B cell (primary cell): ENCODE measurements at regions of chr6 and their contacts with region 1.

Region 1: DNA sequence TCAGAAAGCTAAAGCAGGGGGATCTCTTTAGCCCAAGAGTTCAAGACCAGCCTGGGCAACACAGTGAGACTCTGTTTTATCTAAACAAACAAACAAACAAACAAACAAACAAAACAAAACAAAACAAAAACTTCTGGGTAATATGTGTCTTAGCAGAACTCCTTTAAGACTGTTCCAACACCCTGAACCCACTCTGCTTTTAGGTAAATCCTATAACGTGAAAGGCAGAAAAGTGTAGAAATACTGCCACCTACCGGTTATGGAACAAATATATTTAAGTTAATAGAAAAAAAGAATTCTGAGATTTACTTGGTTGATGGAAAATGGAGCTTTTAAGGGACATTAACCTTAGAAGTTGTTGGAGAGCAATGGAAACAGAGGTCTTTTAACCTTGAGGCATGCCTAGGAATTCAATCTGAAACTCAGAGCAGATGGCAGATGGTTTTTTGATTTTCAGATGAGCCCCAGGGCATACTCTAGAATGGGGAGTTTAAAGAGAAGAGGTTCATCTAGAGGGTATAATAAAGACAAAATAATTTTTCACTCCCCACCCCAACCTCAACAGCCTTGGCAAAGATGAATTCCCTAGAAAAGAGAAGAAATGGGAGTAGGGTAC is 38.5 kb downstream of the SOD2 start:
- DNase-seq: peak; percentile 70
- ATAC-seq: no peak
- H3K4me3 ChIP-seq: no peak overlapping the region
- H3K4me3 Mint-ChIP-seq: no peak overlapping the region
- H3K27ac ChIP-seq: no peak overlapping the region
- H3K27ac Mint-ChIP-seq: no peak overlapping the region
- H3K4me1 ChIP-seq: no peaks in the 10 kb centered on the region
- H3K4me1 Mint-ChIP-seq: no peaks in the 10 kb centered on the region
- H3K27me3 ChIP-seq: no peaks in the 10 kb centered on the region
- H3K27me3 Mint-ChIP-seq: no peaks in the 10 kb centered on the region
- CTCF ChIP-seq: peak; percentile 84

Region 2: GRCh38 chr6:159169193-159169555 is 485.4 kb before region 1 on chr6 and contains the start of gene FNDC1:
- CTCF ChIA-PET with region 1: interaction called, 116 read pairs
- POLR2A ChIA-PET with region 1: no interaction called
- intact Hi-C with region 1: no loop called
- DNase-seq: peak; percentile 66
- ATAC-seq: peak; percentile 86
- H3K4me3 ChIP-seq: peak within 1 kb of the TSS in 3 of 5 experiments; percentile 32 to 51 (median 34)
- H3K4me3 Mint-ChIP-seq: peak within 1 kb of the TSS; percentile 84
- H3K27ac ChIP-seq: no peak within 1 kb of the TSS
- H3K27ac Mint-ChIP-seq: no peak within 1 kb of the TSS
- H3K4me1 ChIP-seq: peaks cover 15 to 20% of the 10 kb centered on the region in 2 donors
- H3K4me1 Mint-ChIP-seq: peaks cover 21% of the 10 kb centered on the region
- H3K27me3 ChIP-seq: peaks cover 0 to 62% (median 54%) of the 10 kb centered on the region in 4 experiments
- H3K27me3 Mint-ChIP-seq: peaks cover 80% of the 10 kb centered on the region
- CTCF ChIP-seq: peak; percentile 18
- total RNA-seq, gene FNDC1: not detected in 2 replicates

Region 3: GRCh38 chr6:159174263-159174969 is 480.2 kb before region 1 on chr6:
- CTCF ChIA-PET with region 1: interaction called, 116 read pairs
- POLR2A ChIA-PET with region 1: no interaction called
- intact Hi-C with region 1: no loop called
- DNase-seq: peak; percentile 79
- ATAC-seq: peak; percentile 71
- H3K4me3 ChIP-seq: peak overlapping the region in 3 of 5 experiments; percentile 16 to 49 (median 34)
- H3K4me3 Mint-ChIP-seq: peak overlapping the region; percentile 11
- H3K27ac ChIP-seq: no peak overlapping the region
- H3K27ac Mint-ChIP-seq: no peak overlapping the region
- H3K4me1 ChIP-seq: peaks cover 14 to 15% of the 10 kb centered on the region in 2 donors
- H3K4me1 Mint-ChIP-seq: peaks cover 17% of the 10 kb centered on the region
- H3K27me3 ChIP-seq: peaks cover 0 to 48% (median 37%) of the 10 kb centered on the region in 4 experiments
- H3K27me3 Mint-ChIP-seq: peaks cover 69% of the 10 kb centered on the region
- CTCF ChIP-seq: peak; percentile 97

Region 4: DNA sequence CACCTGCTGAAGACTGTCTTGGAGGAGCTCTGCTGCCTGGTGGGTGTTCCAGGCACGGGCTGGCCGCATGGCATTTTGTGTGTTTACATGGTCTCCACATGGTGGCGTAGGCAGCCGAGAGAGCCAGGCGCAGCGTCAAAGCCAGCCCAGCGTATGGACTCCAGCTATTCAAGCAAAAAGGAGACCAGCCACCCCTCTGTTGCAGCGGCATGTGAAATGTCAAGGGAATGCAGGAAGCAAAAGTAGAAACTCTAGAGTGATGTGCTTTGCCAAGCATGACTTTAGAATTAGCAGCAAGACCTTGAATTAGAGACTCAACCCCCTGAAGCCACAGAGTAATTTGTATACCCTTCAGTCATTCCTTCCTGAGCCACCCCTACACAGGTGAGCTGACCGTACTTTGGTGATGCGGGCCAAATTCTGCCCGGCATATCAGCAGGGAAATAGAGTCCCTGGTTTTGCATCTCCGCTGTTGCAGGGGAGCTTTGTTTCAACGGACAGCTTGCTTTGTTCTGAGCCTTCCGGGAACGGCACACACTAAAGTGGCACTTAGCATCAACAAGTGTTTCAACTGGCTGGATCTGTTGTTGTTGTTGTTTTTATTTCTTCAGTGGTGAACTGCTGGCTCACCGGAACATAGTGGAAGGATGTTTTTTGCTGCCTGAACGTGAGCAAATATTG is 436.9 kb before region 1 on chr6:
- CTCF ChIA-PET with region 1: interaction called, 11 read pairs
- POLR2A ChIA-PET with region 1: no interaction called
- intact Hi-C with region 1: no loop called
- DNase-seq: peak; percentile 53
- ATAC-seq: no peak
- H3K4me3 ChIP-seq: no peak overlapping the region
- H3K4me3 Mint-ChIP-seq: peak overlapping the region; percentile 61
- H3K27ac ChIP-seq: no peak overlapping the region
- H3K27ac Mint-ChIP-seq: no peak overlapping the region
- H3K4me1 ChIP-seq: peaks cover 6 to 20% of the 10 kb centered on the region in 2 donors
- H3K4me1 Mint-ChIP-seq: peaks cover 27% of the 10 kb centered on the region
- H3K27me3 ChIP-seq: peaks cover 0 to 16% (median 0%) of the 10 kb centered on the region in 4 experiments
- H3K27me3 Mint-ChIP-seq: peaks cover 23% of the 10 kb centered on the region
- CTCF ChIP-seq: no peak

Region 5: GRCh38 chr6:159633196-159633595 is 21.4 kb before region 1 on chr6:
- CTCF ChIA-PET with region 1: interaction called, 17 read pairs
- POLR2A ChIA-PET with region 1: no interaction called
- intact Hi-C with region 1: no loop called
- DNase-seq: no peak
- ATAC-seq: no peak
- H3K4me3 ChIP-seq: no peak overlapping the region
- H3K4me3 Mint-ChIP-seq: no peak overlapping the region
- H3K27ac ChIP-seq: no peak overlapping the region
- H3K27ac Mint-ChIP-seq: no peak overlapping the region
- H3K4me1 ChIP-seq: no peaks in the 10 kb centered on the region
- H3K4me1 Mint-ChIP-seq: no peaks in the 10 kb centered on the region
- H3K27me3 ChIP-seq: no peaks in the 10 kb centered on the region
- H3K27me3 Mint-ChIP-seq: no peaks in the 10 kb centered on the region
- CTCF ChIP-seq: no peak

Region 6: DNA sequence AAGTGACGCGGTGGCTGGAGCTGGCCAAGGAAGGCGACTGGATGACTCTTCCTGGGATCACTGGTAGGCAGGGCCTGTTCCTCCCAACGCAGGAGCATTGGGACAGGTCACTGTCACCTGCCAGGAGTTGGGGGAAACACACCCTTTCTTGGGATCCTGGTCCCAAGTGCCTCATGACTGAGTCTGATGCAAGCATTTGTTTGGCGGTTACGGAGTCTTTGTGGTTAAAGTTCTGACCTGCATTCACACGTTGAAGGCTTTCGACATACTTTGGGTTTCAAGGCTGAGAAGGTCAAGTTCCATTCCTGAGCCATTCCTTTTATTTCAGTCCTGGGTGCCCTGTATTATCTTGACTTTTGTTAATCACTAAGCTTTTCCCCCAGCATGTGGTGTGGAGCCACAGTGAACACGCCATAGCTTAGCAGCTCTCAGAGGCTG is 151.4 kb after region 1 on chr6:
- CTCF ChIA-PET with region 1: no interaction called
- POLR2A ChIA-PET with region 1: no interaction called
- intact Hi-C with region 1: no loop called
- DNase-seq: no peak
- ATAC-seq: no peak
- H3K4me3 ChIP-seq: no peak overlapping the region
- H3K4me3 Mint-ChIP-seq: no peak overlapping the region
- H3K27ac ChIP-seq: no peak overlapping the region
- H3K27ac Mint-ChIP-seq: no peak overlapping the region
- H3K4me1 ChIP-seq: no peaks in the 10 kb centered on the region
- H3K4me1 Mint-ChIP-seq: peaks cover 4% of the 10 kb centered on the region
- H3K27me3 ChIP-seq: no peaks in the 10 kb centered on the region
- H3K27me3 Mint-ChIP-seq: no peaks in the 10 kb centered on the region
- CTCF ChIP-seq: no peak